K562 (cell line): ENCODE measurements at regions of chr16 and their contacts with region 1.

Region 1: GRCh38 chr16:89171463-89172170 is at the start of gene CDH15:
- DNase-seq: peak; percentile 98 to 99 (median 98)
- ATAC-seq: peak; percentile 92
- H3K4me3 ChIP-seq: peak within 1 kb of the TSS; percentile 12
- H3K27ac ChIP-seq: no peak within 1 kb of the TSS
- H3K4me1 ChIP-seq: peaks cover 17 to 96% of the 10 kb centered on the region in 2 experiments
- H3K27me3 ChIP-seq: peaks cover 0 to 18% of the 10 kb centered on the region in 2 experiments; a peak in 2 of 5 replicates
- CTCF ChIP-seq: 0 out of 6 replicates have a peak, but pooled peaks of 1 of the 3 experiments have one; percentile 1
- EP300 ChIP-seq: no peak
- POLR2A ChIP-seq: no peak
- RAD21 ChIP-seq: no peak
- polyA plus RNA-seq, gene CDH15: not detected

Region 2: DNA sequence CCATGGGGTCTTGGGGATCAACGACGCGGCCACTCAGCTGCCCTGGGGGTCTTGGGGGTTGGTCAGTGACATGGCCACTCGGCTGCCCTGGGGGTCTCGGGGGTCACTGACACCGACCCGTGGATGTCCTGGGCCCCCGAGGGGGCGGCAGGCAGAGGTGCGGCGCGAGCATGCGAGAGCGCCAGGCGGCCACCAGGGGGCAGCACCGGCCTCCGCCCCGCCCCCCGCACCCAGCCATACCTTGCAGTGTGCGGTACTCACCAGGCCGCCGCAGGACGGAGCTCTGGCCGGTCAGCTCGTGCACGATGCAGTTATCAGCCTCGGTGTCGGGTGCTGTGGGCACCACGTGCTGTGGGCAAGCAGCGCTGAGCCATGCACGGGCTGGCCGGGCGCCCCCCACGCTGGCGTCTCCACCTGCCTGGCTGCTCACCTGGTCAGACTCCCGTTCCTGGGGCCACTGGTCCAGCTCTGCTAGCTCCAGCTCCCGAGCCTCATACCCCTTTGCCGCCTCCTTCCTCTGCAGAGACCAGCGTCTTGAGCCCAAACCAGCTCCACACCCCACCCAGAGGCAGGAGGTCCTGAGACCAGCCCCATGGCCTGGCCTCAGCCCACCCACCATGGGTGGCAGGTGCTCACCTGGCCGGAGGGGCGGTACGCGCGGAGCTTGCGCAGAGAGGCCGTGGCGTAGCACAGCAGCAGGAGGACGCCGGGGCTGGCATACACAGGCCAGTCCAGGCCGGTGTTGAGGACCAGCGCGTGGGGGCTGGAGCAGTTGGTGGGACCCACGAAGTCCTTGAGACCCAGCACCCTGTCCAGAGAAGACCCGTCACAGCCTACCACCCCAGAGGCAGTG is 434.1 kb before region 1 on chr16:
- CTCF ChIA-PET with region 1: interaction called, 21 read pairs
- POLR2A ChIA-PET with region 1: no interaction called
- in situ Hi-C with region 1: no loop called
- intact Hi-C with region 1: no loop called
- DNase-seq: peak; percentile 92 to 97 (median 93)
- ATAC-seq: peak; percentile 97
- H3K4me3 ChIP-seq: no peak overlapping the region
- H3K27ac ChIP-seq: no peak overlapping the region
- H3K4me1 ChIP-seq: peaks cover 0 to 94% of the 10 kb centered on the region in 2 experiments; a peak in 3 of 5 replicates
- H3K27me3 ChIP-seq: no peaks in the 10 kb centered on the region
- CTCF ChIP-seq: peak; percentile 97 to 99 (median 99)
- EP300 ChIP-seq: peak; percentile 35; the same call in 1 of the 2 replicates
- POLR2A ChIP-seq: peak; percentile 47
- RAD21 ChIP-seq: peak; percentile 93 to 94

Region 3: GRCh38 chr16:88977018-88977811 is 194.4 kb before region 1 on chr16 and contains the start of gene CBFA2T3:
- CTCF ChIA-PET with region 1: no interaction called
- POLR2A ChIA-PET with region 1: no interaction called
- in situ Hi-C with region 1: no loop called
- intact Hi-C with region 1: loop called (anchors 10 kb)
- DNase-seq: peak; percentile 79 to 96 (median 88)
- ATAC-seq: peak; percentile 68
- H3K4me3 ChIP-seq: peak within 1 kb of the TSS; percentile 85
- H3K27ac ChIP-seq: peak within 1 kb of the TSS; percentile 98
- H3K4me1 ChIP-seq: peaks cover 49 to 90% of the 10 kb centered on the region in 2 experiments
- H3K27me3 ChIP-seq: no peaks in the 10 kb centered on the region
- CTCF ChIP-seq: no peak
- EP300 ChIP-seq: peak; percentile 80
- POLR2A ChIP-seq: peak; percentile 44
- RAD21 ChIP-seq: peak in 1 of 2 experiments; percentile 7; a peak in 2 of 4 replicates
- polyA plus RNA-seq, gene CBFA2T3: 2.3 to 2.7 TPM

Region 4: GRCh38 chr16:89201439-89202377 is 30.1 kb after region 1 on chr16:
- CTCF ChIA-PET with region 1: no interaction called
- POLR2A ChIA-PET with region 1: interaction called, 3 read pairs
- in situ Hi-C with region 1: no loop called
- intact Hi-C with region 1: loop called (anchors 1 kb)
- DNase-seq: peak; percentile 88 to 99 (median 99)
- ATAC-seq: peak; percentile 98
- H3K4me3 ChIP-seq: peak overlapping the region; percentile 38
- H3K27ac ChIP-seq: no peak overlapping the region
- H3K4me1 ChIP-seq: peaks cover 0 to 52% of the 10 kb centered on the region in 2 experiments; a peak in 2 of 5 replicates
- H3K27me3 ChIP-seq: peaks cover 7 to 15% of the 10 kb centered on the region in 2 experiments
- CTCF ChIP-seq: no peak
- EP300 ChIP-seq: no peak
- POLR2A ChIP-seq: no peak
- RAD21 ChIP-seq: no peak

Region 5: DNA sequence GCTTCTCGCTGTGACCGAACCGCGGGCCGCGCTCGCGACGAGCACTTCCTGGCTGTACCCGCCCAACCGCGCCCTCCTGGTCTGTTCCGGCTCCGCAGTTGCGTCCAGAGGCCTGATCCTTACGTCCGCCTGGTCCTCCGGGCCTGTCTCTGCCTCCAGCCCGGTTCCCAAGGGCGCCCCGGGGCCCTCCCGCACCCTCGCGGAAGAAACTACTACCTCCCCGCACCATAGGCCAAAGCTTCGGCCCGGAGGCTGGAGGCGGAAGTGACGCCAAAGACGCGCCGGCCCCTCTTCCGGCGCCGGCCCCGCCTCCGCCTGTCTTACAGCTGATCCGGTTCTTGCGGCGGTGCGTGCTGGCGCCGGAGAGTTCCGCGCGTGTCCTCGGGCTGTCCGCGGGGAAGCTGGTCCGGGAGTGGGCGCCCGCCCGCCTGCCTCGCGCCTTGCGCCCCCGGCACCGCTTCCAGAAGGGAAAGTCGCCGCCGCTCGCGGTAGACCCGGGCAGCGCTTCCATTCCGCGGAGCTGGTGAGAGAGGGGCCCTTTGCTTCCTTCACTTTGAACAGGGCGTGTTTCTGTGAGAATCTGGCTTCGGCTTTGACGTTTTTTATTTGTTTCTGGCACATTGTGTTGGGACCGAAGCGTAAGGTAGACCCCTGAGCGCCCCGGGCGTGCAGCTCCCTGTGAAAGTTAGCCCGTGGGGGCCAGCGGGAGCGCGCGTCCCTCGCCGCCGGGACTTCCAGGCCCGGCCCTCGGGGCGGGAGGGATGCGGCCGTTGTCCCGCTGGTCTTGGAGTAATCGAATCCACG is 46.0 kb after region 1 on chr16 and contains the start of gene ZNF778:
- CTCF ChIA-PET with region 1: interaction called, 5 read pairs
- POLR2A ChIA-PET with region 1: no interaction called
- in situ Hi-C with region 1: no loop called
- intact Hi-C with region 1: loop called (anchors 2 kb)
- DNase-seq: peak; percentile 88 to 92 (median 88)
- ATAC-seq: peak; percentile 80
- H3K4me3 ChIP-seq: peak within 1 kb of the TSS; percentile 90
- H3K27ac ChIP-seq: peak within 1 kb of the TSS; percentile 78
- H3K4me1 ChIP-seq: peaks cover 20 to 31% of the 10 kb centered on the region in 2 experiments; a peak in 4 of 5 replicates
- H3K27me3 ChIP-seq: no peaks in the 10 kb centered on the region
- CTCF ChIP-seq: peak in 1 of 3 experiments; percentile 2; a peak in 1 of 6 replicates
- EP300 ChIP-seq: no peak
- POLR2A ChIP-seq: peak; percentile 94
- RAD21 ChIP-seq: no peak
- polyA plus RNA-seq, gene ZNF778: 0.70 to 0.80 TPM